Ascending aorta (tissue), 2 donors: ENCODE measurements at regions of chr12 and their contacts with region 1.

Region 1: GRCh38 chr12:1594261-1595025 is at the start of gene FBXL14:
- DNase-seq: peak; percentile 45 to 92
- H3K4me3 ChIP-seq: peak within 1 kb of the TSS; percentile 92 to 95
- H3K27ac ChIP-seq: peak within 1 kb of the TSS; percentile 84 to 86
- H3K4me1 ChIP-seq: peaks cover 9 to 26% of the 10 kb centered on the region in 2 donors
- H3K27me3 ChIP-seq: no peaks in the 10 kb centered on the region
- CTCF ChIP-seq: peak in 1 of 3 experiments; percentile 40
- total RNA-seq, gene FBXL14: 14.7 TPM

Region 2: GRCh38 chr12:998020-998874 is 596.2 kb before region 1 on chr12:
- intact Hi-C with region 1: loop called (anchors 5 kb)
- DNase-seq: no peak
- H3K4me3 ChIP-seq: no peak overlapping the region
- H3K27ac ChIP-seq: peak overlapping the region; percentile 31 to 63
- H3K4me1 ChIP-seq: peaks cover 0 to 9% of the 10 kb centered on the region in 2 donors
- H3K27me3 ChIP-seq: no peaks in the 10 kb centered on the region
- CTCF ChIP-seq: no peak